HAP-1 (cell line): ENCODE measurements at regions of chr1 and their contacts with region 1.

Region 1: DNA sequence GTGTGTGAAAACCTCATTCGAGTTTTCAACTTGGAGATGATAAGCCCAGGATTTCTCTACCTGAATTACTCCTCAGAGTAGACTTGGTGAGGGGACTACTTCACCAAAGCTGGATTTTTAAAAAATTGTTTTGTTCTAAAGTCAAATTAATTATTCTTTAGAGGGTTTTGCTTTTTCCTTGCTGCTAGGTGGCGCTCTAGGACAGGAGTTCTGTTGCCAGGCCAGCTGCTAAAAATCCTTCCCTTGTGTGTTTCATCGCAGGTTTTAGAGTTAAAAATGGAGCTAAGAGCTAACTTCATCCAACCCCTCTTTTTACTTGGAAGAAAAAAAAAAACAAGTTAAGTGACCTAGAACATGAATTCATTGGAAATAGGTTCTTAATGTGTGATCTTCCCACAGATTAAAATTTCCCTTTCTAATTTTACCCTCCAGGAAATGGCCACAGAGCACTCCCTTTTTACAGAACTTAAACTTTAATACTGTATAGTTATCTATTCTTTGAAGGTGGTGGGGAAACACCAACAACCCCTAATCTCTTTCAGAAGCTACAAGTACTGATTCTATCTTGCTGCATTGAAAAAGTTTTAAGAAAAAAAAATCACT is 36.7 kb upstream of the FAM163A start:
- DNase-seq: peak; percentile 40 to 76
- H3K4me3 ChIP-seq: no peak overlapping the region
- H3K4me1 ChIP-seq: no peaks in the 10 kb centered on the region
- H3K27me3 ChIP-seq: no peaks in the 10 kb centered on the region; the same call in 1 of the 2 replicates

Region 2: DNA sequence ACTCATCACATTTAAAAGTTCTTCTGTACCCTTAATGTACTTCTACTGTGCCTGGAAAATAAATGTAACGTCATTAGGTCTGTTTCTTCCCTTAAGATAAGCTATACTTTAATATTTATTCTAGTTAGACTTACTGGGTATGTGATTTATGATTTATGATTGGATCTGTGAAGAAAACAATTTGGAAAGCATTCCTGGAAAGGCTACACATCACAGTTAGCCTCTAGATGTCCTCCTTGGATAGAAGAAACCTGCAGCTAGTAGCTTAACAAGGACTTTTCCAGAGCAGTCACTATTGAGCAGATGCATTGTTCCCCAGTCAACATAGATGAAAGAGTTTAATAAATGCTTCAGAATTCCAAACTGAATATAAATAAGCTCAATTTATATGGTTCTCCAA is 454.8 kb before region 1 on chr1:
- in situ Hi-C with region 1: no loop called
- DNase-seq: peak in 1 of 2 experiments; percentile 42
- H3K4me3 ChIP-seq: no peak overlapping the region
- H3K4me1 ChIP-seq: peaks cover 5% of the 10 kb centered on the region; the same call in 1 of the 2 replicates
- H3K27me3 ChIP-seq: no peaks in the 10 kb centered on the region

Region 3: DNA sequence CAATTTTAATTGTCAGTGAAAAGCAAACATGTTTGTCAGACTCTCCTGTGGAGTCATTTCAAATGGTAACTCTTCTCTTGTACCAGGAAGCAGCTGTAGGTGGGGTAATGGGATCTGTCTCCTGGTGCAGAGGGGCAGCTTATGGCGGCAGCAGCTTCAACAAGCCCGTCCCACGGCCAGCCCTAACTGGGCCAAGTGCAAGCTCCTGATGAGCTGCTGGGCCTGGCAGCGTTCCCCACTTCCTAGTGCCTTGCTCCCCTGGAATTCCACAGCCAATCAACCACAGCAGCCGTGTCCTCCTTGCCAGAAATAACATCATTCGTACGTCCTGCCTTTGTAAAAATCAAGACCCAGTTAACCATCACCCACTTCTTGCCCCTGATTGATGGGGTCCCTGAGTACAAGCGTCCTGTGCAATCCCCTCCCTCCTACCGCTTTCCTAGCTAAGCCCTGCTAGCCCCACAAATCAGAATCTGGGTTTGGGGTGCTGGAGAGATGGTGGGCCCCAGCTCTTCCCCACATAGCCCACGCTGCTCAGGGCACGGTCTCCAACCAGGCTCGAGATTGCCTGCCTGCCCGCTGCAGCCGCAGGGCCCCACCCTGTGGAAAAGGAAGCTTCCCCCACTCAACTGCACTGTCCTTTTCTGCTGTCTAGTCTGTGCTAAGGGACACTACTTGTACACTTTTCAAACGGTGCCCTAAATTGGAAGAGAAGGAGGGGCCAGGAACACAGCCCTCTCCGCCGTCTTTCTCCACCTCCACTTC is 109.9 kb after region 1 on chr1:
- in situ Hi-C with region 1: loop called (anchors 5 kb)
- DNase-seq: no peak
- H3K4me3 ChIP-seq: no peak overlapping the region
- H3K4me1 ChIP-seq: peaks cover 5% of the 10 kb centered on the region; the same call in 1 of the 2 replicates
- H3K27me3 ChIP-seq: peaks cover 4% of the 10 kb centered on the region; the same call in 1 of the 2 replicates

Region 4: DNA sequence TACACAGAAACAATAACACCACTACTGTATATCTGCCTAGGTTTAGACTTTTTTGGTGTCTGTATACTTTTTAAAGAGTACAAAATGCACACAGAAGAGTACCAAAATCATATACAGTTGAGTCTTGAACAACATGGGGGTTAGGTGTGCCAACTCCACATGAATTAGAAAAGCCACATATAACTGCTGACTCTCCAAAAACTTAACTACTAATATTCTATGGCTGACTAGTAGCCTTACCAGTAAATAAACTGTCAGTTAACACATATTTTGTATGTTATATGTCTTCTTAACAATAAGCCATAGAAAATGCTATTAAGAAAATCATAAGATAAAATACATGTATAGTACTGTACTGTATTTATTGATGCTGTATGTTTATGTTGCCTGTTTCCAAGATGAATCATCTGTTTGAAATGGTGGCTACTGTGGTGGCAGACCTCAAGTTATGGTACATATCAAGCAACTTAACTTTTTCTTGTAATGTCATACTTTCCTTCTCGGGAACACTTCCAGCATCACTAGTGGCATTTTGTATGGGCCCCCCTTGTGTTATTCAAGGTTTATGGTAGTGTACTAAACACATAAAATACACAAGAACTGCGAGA is 594.8 kb after region 1 on chr1:
- in situ Hi-C with region 1: no loop called
- DNase-seq: no peak
- H3K4me3 ChIP-seq: no peak overlapping the region
- H3K4me1 ChIP-seq: no peaks in the 10 kb centered on the region
- H3K27me3 ChIP-seq: no peaks in the 10 kb centered on the region